ENCODE measurements at regions of chr12 and their contacts with region 1.

Region 1: DNA sequence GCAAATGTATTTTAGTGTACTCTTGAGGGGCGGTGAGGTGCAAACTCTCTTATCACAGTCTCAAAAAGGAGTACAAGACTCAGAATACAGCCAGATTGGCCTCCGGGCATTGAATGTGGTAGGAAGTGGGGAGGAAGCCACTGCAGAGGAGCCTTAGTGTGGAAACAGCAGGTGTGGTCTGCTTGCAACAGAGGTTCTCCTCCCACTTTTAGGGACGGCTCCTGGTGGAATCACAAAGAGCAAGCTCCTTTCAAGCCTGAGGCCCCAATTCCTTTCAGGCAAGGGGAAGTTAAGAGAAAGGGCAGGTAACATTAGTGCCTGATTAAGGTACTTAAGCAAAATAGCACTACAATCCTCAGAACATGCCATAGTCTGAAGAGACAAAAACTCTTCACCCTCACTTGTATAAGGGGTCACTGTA is 23.7 kb upstream of the SLC2A3 start:
- DNase-seq: peak; percentile 22
- ATAC-seq: no peak
- H3K4me3 Mint-ChIP-seq: peak overlapping the region; percentile 87
- H3K27ac Mint-ChIP-seq: peak overlapping the region; percentile 94
- H3K4me1 Mint-ChIP-seq: peaks cover 37% of the 10 kb centered on the region
- H3K27me3 Mint-ChIP-seq: no peaks in the 10 kb centered on the region
- CTCF ChIP-seq: no peak

Region 2: DNA sequence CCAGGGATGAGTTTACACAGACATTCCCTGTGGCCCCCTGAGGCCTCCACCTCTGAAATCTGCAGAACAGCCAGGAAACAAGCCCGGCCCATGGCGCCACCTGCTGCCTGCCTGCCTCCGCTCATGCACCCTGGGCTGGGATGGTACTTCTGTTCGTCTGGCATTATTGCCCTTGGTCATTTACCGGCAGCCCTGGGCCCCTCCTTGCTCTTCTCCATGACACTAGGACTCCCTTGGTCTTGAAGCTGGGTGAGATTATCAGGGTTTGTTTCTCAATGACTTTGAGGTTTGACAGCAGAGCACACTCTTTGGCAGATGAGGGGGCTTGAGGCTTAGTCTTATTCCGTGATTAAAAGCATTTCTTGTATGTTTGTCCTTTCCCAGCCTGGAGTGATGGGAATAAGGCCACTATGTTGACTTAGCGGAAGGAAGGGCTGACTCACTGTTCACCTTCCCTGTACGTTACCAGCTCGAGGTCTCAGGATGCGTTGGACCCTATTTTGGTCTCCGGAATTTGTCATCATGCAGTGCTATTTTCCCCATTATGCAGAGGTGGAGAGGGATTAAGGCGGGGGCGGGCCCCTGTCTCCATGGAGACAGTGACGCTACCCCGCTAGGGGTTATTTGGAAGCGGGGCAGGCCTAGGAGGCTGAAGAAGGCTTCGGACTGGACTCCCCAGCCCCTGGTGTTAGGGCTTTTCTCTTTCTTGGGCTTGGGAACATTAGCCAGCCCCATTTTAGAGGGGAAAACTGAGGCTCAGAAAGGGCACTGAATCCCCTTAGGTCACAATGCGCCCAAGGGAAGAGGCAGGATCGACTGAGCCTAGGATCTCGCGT is 770.9 kb before region 1 on chr12:
- CTCF ChIA-PET with region 1: no interaction called
- POLR2A ChIA-PET with region 1: no interaction called
- intact Hi-C with region 1: loop called (anchors 5 kb)
- DNase-seq: peak; percentile 46
- ATAC-seq: peak; percentile 39
- H3K4me3 Mint-ChIP-seq: peak overlapping the region; percentile 92
- H3K27ac Mint-ChIP-seq: peak overlapping the region; percentile 91
- H3K4me1 Mint-ChIP-seq: peaks cover 31% of the 10 kb centered on the region
- H3K27me3 Mint-ChIP-seq: no peaks in the 10 kb centered on the region
- CTCF ChIP-seq: no peak

Region 3: GRCh38 chr12:7948589-7949260 is 11.0 kb before region 1 on chr12:
- CTCF ChIA-PET with region 1: interaction called, 7 read pairs
- POLR2A ChIA-PET with region 1: interaction called, 11 read pairs
- intact Hi-C with region 1: no loop called
- DNase-seq: no peak
- ATAC-seq: peak; percentile 61
- H3K4me3 Mint-ChIP-seq: no peak overlapping the region
- H3K27ac Mint-ChIP-seq: peak overlapping the region; percentile 16
- H3K4me1 Mint-ChIP-seq: peaks cover 11% of the 10 kb centered on the region
- H3K27me3 Mint-ChIP-seq: no peaks in the 10 kb centered on the region
- CTCF ChIP-seq: no peak

Region 4: DNA sequence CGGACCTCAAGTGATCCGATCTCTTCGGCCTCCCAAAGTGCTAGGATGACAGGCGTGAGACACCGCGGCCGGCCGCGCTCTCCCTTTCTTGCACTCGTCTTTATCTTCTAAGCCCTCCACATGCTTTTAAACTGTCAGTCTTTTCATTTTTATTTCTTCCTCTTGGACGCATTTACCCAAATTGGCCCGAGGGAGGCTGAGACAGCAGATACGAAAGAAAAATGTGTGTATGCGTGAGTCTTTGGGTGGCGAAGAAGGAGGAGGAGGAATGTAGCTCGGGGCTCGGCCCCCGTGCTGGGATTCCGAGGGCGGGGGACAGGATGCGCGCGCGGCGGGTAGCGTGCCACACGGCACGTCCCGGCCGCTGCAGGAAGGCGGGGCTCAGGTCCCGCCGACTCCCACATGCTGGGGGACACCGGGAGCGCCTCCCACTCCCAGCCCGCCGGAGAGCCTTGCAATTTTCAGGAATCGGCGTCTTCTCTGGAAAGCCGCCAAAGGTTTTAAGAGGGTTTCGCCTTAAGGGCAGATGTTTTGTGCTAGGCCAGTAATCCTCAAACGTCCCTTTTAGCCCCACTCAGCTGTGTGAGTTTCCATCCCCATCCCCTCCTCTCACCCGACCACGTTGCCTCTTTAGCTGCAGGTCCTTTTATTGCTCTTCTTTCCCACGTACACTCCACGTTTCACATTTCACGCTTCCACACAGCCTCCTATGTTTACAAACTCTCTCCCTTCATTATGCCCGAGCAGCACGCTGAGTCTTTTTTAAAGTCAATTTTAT is 11.0 kb after region 1 on chr12:
- CTCF ChIA-PET with region 1: interaction called, 13 read pairs
- POLR2A ChIA-PET with region 1: interaction called, 64 read pairs
- intact Hi-C with region 1: loop called (anchors 1 kb)
- DNase-seq: peak; percentile 73
- ATAC-seq: peak; percentile 93
- H3K4me3 Mint-ChIP-seq: peak overlapping the region; percentile 81
- H3K27ac Mint-ChIP-seq: peak overlapping the region; percentile 90
- H3K4me1 Mint-ChIP-seq: peaks cover 32% of the 10 kb centered on the region
- H3K27me3 Mint-ChIP-seq: no peaks in the 10 kb centered on the region
- CTCF ChIP-seq: no peak

Region 5: GRCh38 chr12:7981446-7981845 is 21.7 kb after region 1 on chr12:
- CTCF ChIA-PET with region 1: interaction called, 4 read pairs
- POLR2A ChIA-PET with region 1: interaction called, 25 read pairs
- intact Hi-C with region 1: loop called (anchors 1 kb)
- DNase-seq: no peak
- ATAC-seq: no peak
- H3K4me3 Mint-ChIP-seq: no peak overlapping the region
- H3K27ac Mint-ChIP-seq: no peak overlapping the region
- H3K4me1 Mint-ChIP-seq: peaks cover 20% of the 10 kb centered on the region
- H3K27me3 Mint-ChIP-seq: no peaks in the 10 kb centered on the region
- CTCF ChIP-seq: no peak

Region 6: GRCh38 chr12:7995266-7995963 is 35.7 kb after region 1 on chr12:
- CTCF ChIA-PET with region 1: interaction called, 14 read pairs
- POLR2A ChIA-PET with region 1: interaction called, 11 read pairs
- intact Hi-C with region 1: loop called (anchors 1 kb)
- DNase-seq: peak; percentile 50
- ATAC-seq: peak; percentile 99
- H3K4me3 Mint-ChIP-seq: no peak overlapping the region
- H3K27ac Mint-ChIP-seq: no peak overlapping the region
- H3K4me1 Mint-ChIP-seq: peaks cover 3% of the 10 kb centered on the region
- H3K27me3 Mint-ChIP-seq: no peaks in the 10 kb centered on the region
- CTCF ChIP-seq: peak; percentile 53

Region 7: DNA sequence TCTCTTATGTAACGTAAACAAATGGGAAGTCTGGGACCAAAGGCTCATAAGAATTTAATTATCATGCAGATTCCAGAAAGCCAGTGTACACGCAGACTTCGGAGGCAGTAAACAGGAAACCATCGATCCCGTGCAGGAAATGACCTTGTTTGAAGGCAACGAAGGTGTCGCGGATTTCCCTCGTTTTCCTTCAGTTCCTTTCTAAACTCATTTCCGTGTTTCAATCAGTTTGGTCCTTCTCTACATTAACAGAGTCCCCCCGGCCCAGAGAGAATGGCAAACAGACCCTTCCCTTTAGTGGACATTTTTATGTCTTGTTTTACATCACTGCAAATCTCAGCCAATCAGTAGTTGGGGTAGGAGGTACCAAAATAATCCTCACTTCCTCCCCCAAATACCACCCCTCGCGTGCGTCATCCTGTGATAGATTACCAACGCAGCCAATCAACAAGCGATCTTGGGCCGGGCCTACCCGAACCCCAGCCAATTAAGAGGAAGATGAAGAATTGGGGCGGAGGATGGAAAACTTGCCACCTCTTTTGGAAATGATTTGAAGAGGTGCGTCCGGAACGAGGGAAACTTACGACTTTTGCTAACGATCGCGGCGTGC is 66.7 kb after region 1 on chr12:
- CTCF ChIA-PET with region 1: interaction called, 3 read pairs
- POLR2A ChIA-PET with region 1: interaction called, 11 read pairs
- intact Hi-C with region 1: loop called (anchors 1 kb)
- DNase-seq: peak; percentile 80
- ATAC-seq: peak; percentile 96
- H3K4me3 Mint-ChIP-seq: peak overlapping the region; percentile 98
- H3K27ac Mint-ChIP-seq: peak overlapping the region; percentile 100
- H3K4me1 Mint-ChIP-seq: peaks cover 13% of the 10 kb centered on the region
- H3K27me3 Mint-ChIP-seq: no peaks in the 10 kb centered on the region
- CTCF ChIP-seq: no peak